ENCODE measurements at regions of chr16 and their contacts with region 1.

Region 1: GRCh38 chr16:65126845-65127624 is 5.2 kb upstream of the CDH11 start:
- DNase-seq: no peak
- ATAC-seq: no peak
- H3K4me3 ChIP-seq: no peak overlapping the region
- H3K27ac ChIP-seq: no peak overlapping the region
- H3K4me1 ChIP-seq: no peaks in the 10 kb centered on the region
- H3K27me3 ChIP-seq: no peaks in the 10 kb centered on the region
- CTCF ChIP-seq: peak in 2 of 3 experiments; percentile 24; a peak in 2 of 6 replicates
- POLR2A ChIP-seq: no peak
- RAD21 ChIP-seq: no peak

Region 2: DNA sequence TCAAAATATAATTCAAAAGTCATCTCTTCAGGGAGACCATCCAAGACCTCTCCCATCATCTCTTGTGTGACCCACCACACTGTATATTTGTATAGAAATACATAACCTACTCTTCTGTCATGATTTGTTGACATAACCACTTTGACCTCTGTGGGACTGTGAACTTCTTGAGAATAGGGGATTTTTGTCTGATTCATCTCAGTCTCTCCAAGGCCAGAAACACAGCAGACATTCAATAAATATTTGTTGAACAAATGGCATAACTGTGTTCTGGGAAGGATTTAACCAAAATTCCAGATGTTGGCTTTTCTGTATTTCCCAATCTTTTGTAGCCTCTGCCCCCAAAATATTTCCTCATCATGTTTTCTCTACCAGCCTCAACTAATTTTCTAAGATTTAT is 174.9 kb before region 1 on chr16:
- CTCF ChIA-PET with region 1: no interaction called
- POLR2A ChIA-PET with region 1: no interaction called
- RAD21 ChIA-PET with region 1: no interaction called
- intact Hi-C with region 1: no loop called
- DNase-seq: no peak
- ATAC-seq: no peak
- H3K4me3 ChIP-seq: no peak overlapping the region
- H3K27ac ChIP-seq: no peak overlapping the region
- H3K4me1 ChIP-seq: no peaks in the 10 kb centered on the region
- H3K27me3 ChIP-seq: no peaks in the 10 kb centered on the region
- CTCF ChIP-seq: no peak
- POLR2A ChIP-seq: no peak
- RAD21 ChIP-seq: no peak

Region 3: GRCh38 chr16:66270333-66270927 is 1143.4 kb after region 1 on chr16:
- CTCF ChIA-PET with region 1: no interaction called
- POLR2A ChIA-PET with region 1: no interaction called
- RAD21 ChIA-PET with region 1: no interaction called
- intact Hi-C with region 1: loop called (anchors 5 kb)
- DNase-seq: peak; percentile 58
- ATAC-seq: peak; percentile 89
- H3K4me3 ChIP-seq: peak overlapping the region; percentile 22 to 29
- H3K27ac ChIP-seq: no peak overlapping the region
- H3K4me1 ChIP-seq: peaks cover 4 to 19% of the 10 kb centered on the region in 2 experiments; a peak in 3 of 4 replicates
- H3K27me3 ChIP-seq: no peaks in the 10 kb centered on the region
- CTCF ChIP-seq: peak; percentile 42 to 85 (median 81); a peak in 5 of 6 replicates
- POLR2A ChIP-seq: no peak
- RAD21 ChIP-seq: peak; percentile 73

Measured in HCT116 (cell line).